Body of pancreas (tissue), 4 donors: ENCODE measurements at regions of chr2 and their contacts with region 1.

Region 1: DNA sequence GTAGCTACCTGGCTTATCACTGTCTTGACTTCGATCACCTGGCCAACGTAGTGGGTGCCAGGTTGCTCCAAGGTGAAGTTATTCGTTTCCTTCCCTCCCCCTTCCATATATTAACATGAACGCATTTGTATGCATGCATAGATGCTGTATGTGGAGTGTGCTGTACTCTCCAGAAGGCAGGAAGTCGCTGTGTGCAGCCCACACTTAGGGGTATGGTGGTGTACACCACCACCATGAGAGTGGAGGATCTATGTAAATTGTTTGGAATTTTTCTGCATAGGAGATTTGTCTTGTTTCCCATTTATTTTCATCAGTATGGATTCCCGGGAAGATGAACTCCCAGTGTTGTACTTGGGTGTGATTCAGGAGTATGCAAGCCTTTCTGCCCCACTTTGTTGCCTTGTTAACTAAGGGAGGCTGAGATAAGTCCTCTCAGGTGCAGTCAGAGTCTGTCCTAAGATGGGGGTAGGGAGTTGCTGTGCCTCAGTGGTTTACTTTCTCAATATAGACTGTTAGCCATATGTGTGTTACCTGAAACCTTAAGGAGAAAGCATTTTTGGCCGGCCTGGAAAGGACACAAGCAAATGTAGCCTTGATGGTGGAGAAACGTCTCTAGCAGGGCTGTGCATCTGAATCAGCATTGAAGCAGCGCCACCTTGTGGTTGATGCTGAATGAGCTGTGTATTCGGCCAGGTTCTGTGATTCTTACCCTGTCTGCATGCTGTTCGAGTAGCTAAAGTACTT is 149.8 kb downstream of the TANC1 start:
- DNase-seq: peak; percentile 81 to 90 (median 86)
- ATAC-seq: peak; percentile 93
- H3K4me3 ChIP-seq: no peak overlapping the region
- H3K27ac ChIP-seq: no peak overlapping the region
- H3K4me1 ChIP-seq: no peaks in the 10 kb centered on the region
- H3K27me3 ChIP-seq: no peaks in the 10 kb centered on the region
- CTCF ChIP-seq: peak; percentile 81 to 90 (median 83)
- POLR2A ChIP-seq: no peak

Region 2: GRCh38 chr2:158903711-158904443 is 214.4 kb before region 1 on chr2:
- intact Hi-C with region 1: loop called (anchors 5 kb)
- DNase-seq: no peak
- ATAC-seq: no peak
- H3K4me3 ChIP-seq: no peak overlapping the region
- H3K27ac ChIP-seq: no peak overlapping the region
- H3K4me1 ChIP-seq: peaks cover 3% of the 10 kb centered on the region
- H3K27me3 ChIP-seq: no peaks in the 10 kb centered on the region
- CTCF ChIP-seq: no peak
- POLR2A ChIP-seq: no peak

Region 3: DNA sequence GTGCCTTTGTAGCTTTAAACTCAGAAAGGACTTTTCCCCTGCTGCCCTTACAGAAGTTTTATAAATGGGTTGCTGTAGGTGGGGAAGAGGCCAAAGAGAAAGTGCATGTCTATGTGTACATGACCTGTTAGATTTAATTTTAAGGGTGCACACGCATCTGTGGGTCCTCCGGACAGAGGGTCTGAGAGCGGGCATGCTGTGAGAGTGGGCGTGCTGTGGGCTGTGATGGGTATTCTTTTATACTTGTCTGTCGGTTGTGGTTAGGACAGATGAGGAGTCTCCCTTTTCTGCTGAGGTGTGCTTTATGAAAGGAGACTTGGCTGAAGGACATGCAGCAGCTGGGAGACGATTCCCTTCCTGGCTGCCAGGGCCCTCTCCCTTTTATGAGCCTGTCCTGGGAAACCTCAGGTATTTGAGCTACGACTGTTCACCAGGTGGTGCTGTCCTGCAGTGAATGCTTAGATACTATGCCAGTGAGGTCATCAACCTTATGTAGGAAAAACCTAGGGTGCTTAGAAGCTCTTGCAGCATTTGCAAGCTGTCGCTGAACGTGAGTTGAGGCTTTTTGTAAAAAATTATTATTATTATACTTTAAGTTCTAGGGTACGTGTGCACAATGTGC is 82.4 kb before region 1 on chr2:
- intact Hi-C with region 1: loop called (anchors 10 kb)
- DNase-seq: peak; percentile 26 to 55 (median 42)
- ATAC-seq: peak; percentile 71
- H3K4me3 ChIP-seq: no peak overlapping the region
- H3K27ac ChIP-seq: no peak overlapping the region
- H3K4me1 ChIP-seq: peaks cover 15% of the 10 kb centered on the region
- H3K27me3 ChIP-seq: no peaks in the 10 kb centered on the region
- CTCF ChIP-seq: peak in 6 of 7 experiments; percentile 11 to 54 (median 37)
- POLR2A ChIP-seq: no peak